GM10248 (cell line): ENCODE measurements at regions of chr12 and their contacts with region 1.

Region 1: GRCh38 chr12:44748950-44749468 is 127.1 kb downstream of the NELL2 start:
- DNase-seq: no peak
- CTCF ChIP-seq: no peak

Region 2: GRCh38 chr12:44668443-44668842 is 80.6 kb before region 1 on chr12:
- CTCF ChIA-PET with region 1: no interaction called
- POLR2A ChIA-PET with region 1: no interaction called
- DNase-seq: no peak
- CTCF ChIP-seq: no peak

Region 3: DNA sequence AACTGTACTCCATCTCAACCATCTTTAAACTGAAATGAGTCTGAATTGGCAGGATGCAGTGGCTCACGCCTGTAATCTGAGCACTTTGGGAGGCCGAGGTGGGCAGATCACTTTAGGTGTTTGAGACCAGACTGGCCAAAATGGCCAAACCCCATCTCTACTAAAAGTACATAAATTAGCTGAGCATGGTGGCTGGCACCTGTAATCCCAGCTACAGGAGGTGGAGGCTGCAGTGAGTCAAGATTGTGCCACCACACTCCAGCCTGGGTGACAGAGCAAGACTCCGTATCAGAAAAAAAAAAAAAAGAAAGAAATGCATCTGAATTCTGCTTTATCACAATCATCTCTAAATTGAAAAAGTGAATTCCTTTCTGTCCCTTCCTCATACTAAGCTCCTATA is 16.8 kb after region 1 on chr12:
- CTCF ChIA-PET with region 1: interaction called, 15 read pairs
- POLR2A ChIA-PET with region 1: no interaction called
- DNase-seq: no peak
- CTCF ChIP-seq: no peak

Region 4: GRCh38 chr12:44774815-44775411 is 25.9 kb after region 1 on chr12:
- CTCF ChIA-PET with region 1: interaction called, 11 read pairs
- POLR2A ChIA-PET with region 1: no interaction called
- DNase-seq: peak; percentile 35
- CTCF ChIP-seq: peak; percentile 78